Posterior vena cava (tissue), 2 donors: ENCODE measurements at regions of chrX and their contacts with region 1.

Region 1: DNA sequence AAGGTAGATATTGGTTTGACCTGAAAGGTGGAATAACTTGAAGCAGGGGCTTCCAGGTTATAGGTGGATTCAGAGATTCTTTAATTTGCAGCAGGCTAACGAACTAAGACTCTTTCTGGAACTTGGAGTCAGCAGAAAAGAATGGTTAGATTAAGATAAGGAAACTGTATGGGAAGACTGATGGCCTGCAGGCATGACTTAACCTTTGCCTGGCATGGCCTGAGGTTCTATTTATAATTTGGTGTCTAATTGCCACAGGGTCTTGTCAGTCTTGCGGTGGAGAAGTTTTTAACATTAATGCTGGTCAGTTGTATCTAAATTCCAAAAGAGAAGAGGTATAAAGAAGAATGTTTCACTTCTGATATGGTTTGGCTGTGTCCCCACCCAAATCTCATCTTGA is 110.3 kb upstream of the VCX3A start:
- DNase-seq: no peak

Region 2: DNA sequence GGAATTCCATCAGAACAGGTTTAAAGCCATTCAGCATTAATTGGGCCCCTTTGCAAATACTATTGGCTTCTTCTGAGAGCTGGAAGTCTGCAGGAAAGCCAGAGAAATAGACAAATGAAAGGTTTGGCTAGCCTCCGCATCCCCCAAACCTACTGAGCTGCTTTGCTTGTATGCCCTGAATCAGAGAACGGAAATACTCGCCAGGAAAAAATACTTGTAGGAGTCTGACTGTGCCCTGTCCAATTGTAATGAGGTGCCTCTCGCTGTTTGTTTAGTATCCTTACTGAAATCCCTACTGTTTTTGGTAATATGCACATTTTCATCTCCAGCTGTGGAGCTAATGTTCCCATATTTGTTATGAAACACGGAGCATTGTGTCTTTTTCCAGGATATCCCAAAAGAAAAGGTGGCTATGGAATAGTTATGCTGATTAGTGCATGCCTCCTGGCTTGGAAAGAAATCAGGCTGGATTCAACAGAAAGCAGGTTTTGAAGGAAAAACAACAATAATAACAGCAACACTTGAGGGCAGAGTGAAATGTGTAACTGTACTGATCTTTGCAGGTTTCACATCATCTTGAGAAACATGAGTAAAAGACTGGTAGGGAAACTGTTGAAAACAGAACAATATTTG is 365.8 kb before region 1 on chrX:
- intact Hi-C with region 1: no loop called
- DNase-seq: no peak

Region 3: DNA sequence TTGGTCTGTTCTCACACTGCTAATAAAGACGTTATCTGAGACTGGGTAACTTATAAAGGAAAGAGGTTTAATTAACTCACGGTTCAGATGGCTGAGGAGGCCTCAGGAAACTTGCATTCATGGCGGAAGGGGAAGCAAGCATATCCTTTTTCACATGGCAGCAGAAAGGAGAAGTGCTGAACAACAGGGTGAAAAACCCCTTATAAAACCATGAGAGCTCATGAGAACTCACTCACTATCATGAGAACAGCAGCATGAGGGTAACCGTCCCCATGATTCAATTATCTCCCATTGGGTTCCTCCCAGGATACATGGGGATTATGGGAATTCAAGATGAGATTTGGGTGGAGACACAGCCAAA is 22.2 kb after region 1 on chrX:
- intact Hi-C with region 1: no loop called
- DNase-seq: no peak

Region 4: GRCh38 chrX:6683353-6683752 is 38.1 kb after region 1 on chrX:
- intact Hi-C with region 1: loop called in 1 of 2 experiments (anchors 1 kb)
- DNase-seq: no peak